ENCODE measurements at regions of chr20 and their contacts with region 1.

Region 1: DNA sequence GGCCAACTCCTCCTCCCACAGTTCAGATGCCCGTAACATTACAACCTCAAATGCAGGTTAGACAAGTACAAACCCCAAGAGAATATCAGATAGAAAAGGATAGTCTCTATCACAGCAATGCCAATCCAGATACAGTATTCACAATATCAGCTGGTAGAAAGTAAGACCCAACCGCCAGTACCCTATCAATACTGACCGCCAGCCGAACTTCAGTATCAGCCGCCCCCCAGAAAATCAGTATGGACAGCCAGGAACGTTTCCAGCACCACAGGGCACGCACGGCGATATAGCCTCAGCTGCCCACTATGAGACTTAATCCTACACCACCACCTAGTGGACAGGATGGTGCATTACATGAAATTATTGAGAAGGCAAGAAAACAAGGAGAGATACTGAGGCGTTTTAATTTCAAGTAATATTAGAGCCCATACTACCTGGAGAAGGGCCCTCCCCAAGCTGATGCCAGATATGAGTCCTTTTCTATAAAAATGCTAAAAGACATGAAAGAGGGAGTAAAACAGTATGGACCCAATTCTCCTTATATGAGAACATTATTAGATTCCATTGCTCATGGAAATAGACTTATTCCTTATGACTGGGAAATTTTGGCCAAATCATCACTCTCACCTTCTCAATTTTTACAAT is 17.6 kb upstream of the EIF2S2 start:
- DNase-seq: peak; percentile 37 to 64
- ATAC-seq: peak; percentile 69 to 83 (median 78)
- H3K4me3 ChIP-seq: no peak overlapping the region
- H3K27ac ChIP-seq: no peak overlapping the region
- H3K4me1 ChIP-seq: peaks cover 0 to 7% (median 0%) of the 10 kb centered on the region in 9 donors
- H3K27me3 ChIP-seq: no peaks in the 10 kb centered on the region
- CTCF ChIP-seq: peak; percentile 83 to 93 (median 86)

Region 2: DNA sequence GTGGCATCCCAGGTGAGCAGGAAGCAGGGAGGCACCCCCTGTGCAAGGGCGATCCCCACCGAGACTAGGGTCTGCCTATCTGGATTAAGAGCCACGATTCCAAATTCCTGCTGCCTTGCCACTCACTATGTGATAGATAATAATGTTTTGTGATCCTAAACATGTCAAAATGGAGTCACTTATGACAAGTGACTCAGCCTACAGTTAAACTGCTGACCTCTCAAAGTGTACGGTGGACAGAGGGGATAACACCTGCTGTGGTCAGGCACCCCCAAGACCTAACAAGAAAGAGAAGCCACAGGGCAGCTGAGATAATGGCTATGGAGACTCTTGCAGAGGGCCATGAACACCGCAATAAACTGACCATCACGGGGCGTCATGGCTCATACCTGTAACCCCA is 670.0 kb before region 1 on chr20:
- intact Hi-C with region 1: loop called in 1 of 10 experiments (anchors 5 kb)
- DNase-seq: no peak
- ATAC-seq: no peak
- H3K4me3 ChIP-seq: no peak overlapping the region
- H3K27ac ChIP-seq: no peak overlapping the region
- H3K4me1 ChIP-seq: peaks cover 0 to 16% (median 0%) of the 10 kb centered on the region in 9 donors
- H3K27me3 ChIP-seq: no peaks in the 10 kb centered on the region
- CTCF ChIP-seq: no peak

Region 3: GRCh38 chr20:33925867-33926266 is 203.8 kb before region 1 on chr20:
- intact Hi-C with region 1: loop called in 6 of 10 experiments (anchors 5 to 10 kb)
- DNase-seq: no peak
- ATAC-seq: no peak
- H3K4me3 ChIP-seq: no peak overlapping the region
- H3K27ac ChIP-seq: no peak overlapping the region
- H3K4me1 ChIP-seq: no peaks in the 10 kb centered on the region
- H3K27me3 ChIP-seq: no peaks in the 10 kb centered on the region
- CTCF ChIP-seq: no peak

Region 4: DNA sequence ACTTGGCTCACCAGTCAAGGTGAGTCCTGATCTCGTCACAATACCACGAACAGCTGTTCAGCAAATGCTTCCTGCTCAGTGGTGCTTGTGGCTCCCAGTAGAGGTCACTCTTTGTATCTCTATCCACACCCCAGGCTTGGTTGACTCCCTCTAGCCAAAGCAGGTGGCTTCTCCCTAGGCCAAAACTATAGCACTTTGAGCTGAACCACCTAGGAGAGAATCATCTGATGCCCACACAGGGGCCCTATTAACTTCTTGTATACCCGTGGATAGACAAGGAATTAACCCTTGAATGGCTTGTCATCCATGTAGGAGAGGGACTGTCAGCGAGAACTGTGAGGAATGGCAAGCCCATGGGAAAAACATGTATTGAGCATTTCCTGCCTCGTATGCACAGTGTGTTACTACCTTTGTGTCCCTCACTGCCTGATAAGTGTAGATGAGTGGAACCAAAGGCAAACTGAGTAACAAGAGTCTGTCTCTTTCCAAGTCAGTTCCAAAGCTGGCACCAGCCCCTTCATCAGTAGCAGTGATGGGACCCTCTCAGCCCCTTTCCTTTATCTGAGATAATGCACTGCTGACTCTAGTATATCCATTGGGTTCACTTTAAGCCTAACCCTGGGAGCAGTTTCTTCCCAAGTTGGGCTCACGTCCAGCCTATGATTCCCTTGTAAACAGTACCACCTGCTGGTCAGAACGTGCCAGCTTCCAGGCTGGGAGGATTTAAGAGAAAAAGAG is 60.1 kb before region 1 on chr20:
- intact Hi-C with region 1: loop called in 2 of 10 experiments (anchors 10 kb)
- DNase-seq: peak; percentile 48 to 75
- ATAC-seq: peak; percentile 86 to 93 (median 88)
- H3K4me3 ChIP-seq: no peak overlapping the region
- H3K27ac ChIP-seq: peak overlapping the region in 2 of 10 donors; percentile 4 to 54
- H3K4me1 ChIP-seq: peaks cover 14 to 53% (median 38%) of the 10 kb centered on the region in 9 donors
- H3K27me3 ChIP-seq: no peaks in the 10 kb centered on the region
- CTCF ChIP-seq: peak; percentile 57 to 93 (median 87)

Region 5: GRCh38 chr20:34506480-34506879 is 376.8 kb after region 1 on chr20:
- intact Hi-C with region 1: no loop called
- DNase-seq: no peak
- ATAC-seq: no peak
- H3K4me3 ChIP-seq: no peak overlapping the region
- H3K27ac ChIP-seq: no peak overlapping the region
- H3K4me1 ChIP-seq: no peaks in the 10 kb centered on the region
- H3K27me3 ChIP-seq: no peaks in the 10 kb centered on the region
- CTCF ChIP-seq: no peak

Region 6: DNA sequence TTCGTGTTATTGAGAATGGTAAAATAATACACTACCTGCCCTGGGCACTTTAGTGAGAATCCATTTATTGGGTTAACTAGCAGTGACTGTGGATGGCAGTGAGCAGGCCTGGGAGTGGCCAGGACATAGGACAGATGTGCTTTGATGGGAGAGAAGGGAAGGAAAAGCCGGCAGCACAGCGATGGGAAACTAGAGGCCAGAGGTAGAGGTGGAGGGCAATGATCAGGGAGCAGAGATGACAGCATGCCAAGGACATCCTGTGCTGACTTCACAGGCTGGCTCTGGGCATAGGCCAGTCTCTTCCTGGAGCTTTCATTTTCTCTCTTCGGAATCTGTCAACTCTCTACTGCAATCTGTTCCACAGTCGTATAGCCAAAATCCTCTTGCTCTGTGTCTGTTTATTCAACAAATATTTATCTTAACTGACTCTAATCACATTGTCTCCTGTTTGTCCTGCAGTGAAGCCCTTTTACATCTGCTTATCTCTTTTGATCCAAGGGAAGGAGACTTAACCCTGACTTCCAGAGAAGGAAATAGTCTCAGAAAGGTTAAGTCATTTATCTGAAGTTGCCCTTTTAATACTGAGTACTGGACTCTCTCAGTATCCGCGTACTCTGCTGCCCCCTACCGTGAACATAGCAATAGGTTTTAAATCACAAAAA is 1078.4 kb after region 1 on chr20:
- intact Hi-C with region 1: no loop called
- DNase-seq: peak; percentile 66 to 90
- ATAC-seq: peak; percentile 91 to 98 (median 96)
- H3K4me3 ChIP-seq: peak overlapping the region in 7 of 10 donors; percentile 1 to 32 (median 24)
- H3K27ac ChIP-seq: peak overlapping the region; percentile 36 to 82 (median 60)
- H3K4me1 ChIP-seq: peaks cover 0 to 13% (median 5%) of the 10 kb centered on the region in 9 donors
- H3K27me3 ChIP-seq: no peaks in the 10 kb centered on the region
- CTCF ChIP-seq: peak; percentile 77 to 89 (median 82)